Dendritic cell treated with granulocyte-macrophage colony-stimulating factor and Interleukin-4, amounts not matched to agents 40 ng/mL and 50 ng/mL, for 4 days (primary cell): ENCODE measurements at regions of chr4 and their contacts with region 1.

Region 1: GRCh38 chr4:6795821-6796220 is 13.3 kb downstream of the KIAA0232 start:
- H3K4me3 Mint-ChIP-seq: no peak overlapping the region
- H3K27ac Mint-ChIP-seq: peak overlapping the region; percentile 23
- H3K4me1 Mint-ChIP-seq: peaks cover 53% of the 10 kb centered on the region
- H3K27me3 Mint-ChIP-seq: no peaks in the 10 kb centered on the region

Region 2: GRCh38 chr4:6834867-6835266 is 39.0 kb after region 1 on chr4:
- intact Hi-C with region 1: loop called (anchors 5 kb)
- H3K4me3 Mint-ChIP-seq: no peak overlapping the region
- H3K27ac Mint-ChIP-seq: no peak overlapping the region
- H3K4me1 Mint-ChIP-seq: peaks cover 14% of the 10 kb centered on the region
- H3K27me3 Mint-ChIP-seq: no peaks in the 10 kb centered on the region